HEK293 (cell line): ENCODE measurements at regions of chr9 and their contacts with region 1.

Region 1: DNA sequence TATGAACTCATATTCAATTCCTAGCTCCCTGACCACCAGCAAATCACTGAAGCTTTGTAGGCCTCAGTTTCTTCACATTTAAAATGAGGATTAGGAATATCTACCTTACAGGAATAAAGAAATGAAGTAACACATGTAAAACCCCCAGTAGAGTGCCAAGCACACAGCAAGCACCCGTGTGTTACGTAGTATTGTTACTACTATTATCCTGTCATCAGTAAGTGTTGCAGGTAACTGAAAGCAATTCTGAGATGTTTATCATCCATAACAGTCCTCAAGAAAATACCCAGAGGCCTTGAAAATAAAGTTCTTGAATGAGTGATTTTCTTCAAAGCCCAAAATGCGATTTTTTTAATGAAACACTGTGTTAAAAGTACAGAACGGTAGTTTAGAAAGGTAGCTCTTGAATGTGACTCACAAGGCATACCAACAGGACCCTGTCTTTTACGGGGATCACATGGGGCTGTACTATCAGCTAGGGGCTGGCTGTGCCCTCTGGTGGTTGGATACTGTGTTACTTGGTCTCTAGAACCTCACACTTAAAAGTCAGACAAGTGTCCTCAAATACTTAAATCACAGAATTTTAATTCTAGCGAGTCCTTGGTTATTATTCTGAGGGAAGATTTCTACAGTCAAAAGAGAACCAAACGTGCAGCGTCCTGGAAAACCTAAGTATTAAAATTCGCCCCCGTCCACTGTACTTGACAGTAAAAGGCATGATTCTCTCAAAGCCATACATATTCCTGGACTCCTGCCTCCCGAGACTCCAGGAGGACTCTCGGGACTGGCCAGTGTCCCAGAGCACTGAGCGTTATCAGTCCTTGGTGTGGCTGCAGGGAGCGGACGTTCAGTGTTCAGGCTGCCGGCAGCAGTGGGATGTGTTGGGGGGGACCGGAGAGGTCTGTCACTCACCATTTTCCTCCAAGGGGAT is 725 bp downstream of the NDUFB6 start:
- H3K4me3 ChIP-seq: peak overlapping the region; percentile 57
- H3K27ac ChIP-seq: peak overlapping the region; percentile 64
- H3K4me1 ChIP-seq: peaks cover 4% of the 10 kb centered on the region; the same call in 1 of the 2 replicates
- CTCF ChIP-seq: 0 out of 2 replicates have a peak, but pooled peaks have one; percentile 19

Region 2: DNA sequence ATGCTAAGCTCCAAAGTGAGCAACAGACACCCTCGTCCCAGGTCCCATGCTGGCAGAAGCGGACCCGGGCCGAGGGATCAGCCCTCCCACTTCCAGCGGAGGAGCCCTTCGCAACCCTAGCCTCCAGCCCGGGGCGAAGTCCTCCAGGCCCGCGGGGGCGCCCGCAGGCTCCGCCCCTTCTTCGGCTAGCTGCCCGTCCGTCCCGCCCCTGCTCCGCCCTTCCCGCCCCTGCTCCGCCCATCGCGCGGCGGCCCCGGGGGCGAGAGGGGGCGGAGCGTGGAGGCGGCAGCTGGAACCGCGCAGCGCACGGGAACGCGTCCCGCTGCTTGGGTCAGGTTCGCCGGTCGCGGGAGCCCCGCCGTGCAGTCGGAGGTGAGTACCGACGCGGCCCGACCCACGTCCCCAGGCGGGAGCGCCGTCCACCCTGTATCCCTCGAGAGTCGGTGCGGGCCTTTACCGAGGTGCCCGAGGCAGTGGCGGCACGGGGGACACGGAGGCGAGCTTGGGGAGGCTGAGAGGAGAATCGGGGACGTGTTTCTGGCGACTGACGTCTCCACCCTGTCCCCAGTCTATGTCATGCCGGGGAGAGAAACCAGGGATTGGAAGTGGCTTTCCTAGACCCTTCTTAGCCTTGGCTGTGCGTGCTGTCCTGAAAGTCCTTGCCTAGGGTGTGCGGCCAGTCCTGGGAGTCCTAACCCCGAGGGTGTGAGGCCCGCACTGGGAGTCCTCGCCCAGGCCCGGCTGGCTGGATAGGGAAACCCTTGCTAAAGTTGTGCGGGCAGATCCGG is 187.7 kb before region 1 on chr9 and contains the start of gene ACO1:
- CTCF ChIA-PET with region 1: interaction called, 583 read pairs
- POLR2A ChIA-PET with region 1: interaction called, 14 read pairs
- H3K4me3 ChIP-seq: peak within 1 kb of the TSS; percentile 92
- H3K27ac ChIP-seq: peak within 1 kb of the TSS; percentile 41; the same call in 1 of the 2 replicates
- H3K4me1 ChIP-seq: no peaks in the 10 kb centered on the region
- CTCF ChIP-seq: no peak

Region 3: GRCh38 chr9:32550562-32551433 is 21.4 kb before region 1 on chr9:
- CTCF ChIA-PET with region 1: interaction called, 10 read pairs
- POLR2A ChIA-PET with region 1: interaction called, 7 read pairs
- H3K4me3 ChIP-seq: peak overlapping the region; percentile 84
- H3K27ac ChIP-seq: peak overlapping the region; percentile 91
- H3K4me1 ChIP-seq: 0 out of 2 replicates have a peak, but pooled peaks cover 4% of the 10 kb centered on the region
- CTCF ChIP-seq: peak; percentile 65; the same call in 1 of the 2 replicates

Region 4: DNA sequence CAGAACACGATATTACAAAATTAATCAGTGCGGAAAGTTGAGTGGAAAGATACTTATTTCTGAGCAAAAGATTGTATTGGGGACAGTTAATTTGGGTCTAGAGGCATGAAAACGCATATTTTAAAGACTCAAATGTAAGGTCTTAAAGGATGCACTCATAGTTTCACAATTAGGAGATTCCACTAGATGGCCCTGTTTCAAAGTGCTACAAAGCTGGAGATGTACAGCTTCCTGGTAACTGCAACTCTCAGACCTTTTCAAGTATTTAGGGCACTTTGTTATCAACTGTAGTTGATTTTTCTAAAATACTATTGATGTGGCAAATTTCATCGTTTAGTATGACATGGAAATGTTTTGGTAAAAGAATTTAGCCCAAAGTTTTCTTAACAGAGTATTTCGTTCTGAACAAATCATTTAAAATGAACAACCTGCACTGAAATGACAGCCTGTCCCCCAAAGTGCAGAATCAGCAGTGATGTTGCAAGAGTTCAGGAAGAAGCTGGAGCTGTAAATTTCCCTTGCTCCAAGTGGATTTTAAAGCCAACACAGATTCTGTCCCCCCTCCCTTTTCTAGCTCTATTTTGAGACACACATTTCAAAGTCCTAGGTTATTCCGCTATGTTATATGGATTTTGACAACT is 17.0 kb after region 1 on chr9:
- CTCF ChIA-PET with region 1: interaction called, 11 read pairs
- POLR2A ChIA-PET with region 1: no interaction called
- H3K4me3 ChIP-seq: no peak overlapping the region
- H3K27ac ChIP-seq: no peak overlapping the region
- H3K4me1 ChIP-seq: no peaks in the 10 kb centered on the region
- CTCF ChIP-seq: no peak